ENCODE measurements at regions of chr7 and their contacts with region 1.

Region 1: DNA sequence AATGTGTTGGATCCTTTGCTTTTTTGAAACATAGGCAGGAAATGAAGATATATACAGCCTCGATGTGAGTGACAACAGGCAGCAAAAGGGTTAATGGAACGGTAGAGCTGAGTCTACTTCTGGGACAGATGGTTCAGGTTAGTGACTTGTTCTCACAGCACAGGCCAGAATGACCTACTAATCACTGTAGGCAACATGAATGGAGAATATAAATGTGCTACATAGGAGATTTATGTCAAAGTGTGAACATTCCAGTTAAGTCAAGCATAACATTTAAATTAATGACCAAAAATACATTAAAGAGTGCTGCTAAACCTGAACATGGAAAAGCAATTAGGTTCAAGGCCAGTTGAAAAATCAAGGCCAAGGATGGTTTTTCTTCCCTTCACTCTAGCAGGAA is 235.2 kb downstream of the POU6F2 start:
- H3K4me3 ChIP-seq: no peak overlapping the region
- H3K27ac ChIP-seq: no peak overlapping the region
- H3K4me1 ChIP-seq: no peaks in the 10 kb centered on the region
- CTCF ChIP-seq: no peak

Region 2: GRCh38 chr7:39186671-39187070 is 26.2 kb before region 1 on chr7:
- CTCF ChIA-PET with region 1: no interaction called
- POLR2A ChIA-PET with region 1: no interaction called
- H3K4me3 ChIP-seq: no peak overlapping the region
- H3K27ac ChIP-seq: no peak overlapping the region
- H3K4me1 ChIP-seq: no peaks in the 10 kb centered on the region
- CTCF ChIP-seq: no peak

Region 3: DNA sequence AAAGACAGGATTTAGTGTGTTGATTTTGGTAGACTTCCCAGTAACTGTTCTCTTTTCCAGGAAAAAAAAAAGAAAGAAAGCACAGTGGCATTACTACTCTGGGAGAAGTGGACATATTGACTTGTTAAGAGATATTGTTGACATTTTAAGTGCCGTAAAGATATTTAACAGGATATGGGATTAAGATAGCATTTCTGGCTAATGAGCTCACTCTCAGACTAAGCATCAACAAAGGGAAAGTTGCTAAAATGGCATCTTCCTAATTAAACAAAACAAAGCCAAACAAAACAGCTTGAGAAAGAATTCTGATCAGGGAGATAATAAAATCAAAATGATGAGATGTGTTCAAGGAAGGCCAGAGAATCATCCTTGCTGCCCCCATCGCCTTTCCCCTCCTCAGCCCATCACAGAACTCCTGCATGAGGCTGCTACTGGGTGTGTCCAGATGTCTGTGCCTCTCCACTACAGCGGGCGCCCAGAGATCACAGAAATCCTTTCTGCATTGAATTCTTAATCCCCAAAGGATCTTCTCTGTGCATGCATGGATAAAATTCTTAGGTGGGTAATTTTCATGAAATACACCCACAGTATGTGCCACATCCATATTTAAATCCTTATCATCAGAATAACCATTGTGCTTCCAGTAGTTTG is 35.3 kb after region 1 on chr7:
- CTCF ChIA-PET with region 1: no interaction called
- POLR2A ChIA-PET with region 1: interaction called, 13 read pairs
- H3K4me3 ChIP-seq: no peak overlapping the region
- H3K27ac ChIP-seq: no peak overlapping the region
- H3K4me1 ChIP-seq: peaks cover 11% of the 10 kb centered on the region
- CTCF ChIP-seq: no peak

Region 4: DNA sequence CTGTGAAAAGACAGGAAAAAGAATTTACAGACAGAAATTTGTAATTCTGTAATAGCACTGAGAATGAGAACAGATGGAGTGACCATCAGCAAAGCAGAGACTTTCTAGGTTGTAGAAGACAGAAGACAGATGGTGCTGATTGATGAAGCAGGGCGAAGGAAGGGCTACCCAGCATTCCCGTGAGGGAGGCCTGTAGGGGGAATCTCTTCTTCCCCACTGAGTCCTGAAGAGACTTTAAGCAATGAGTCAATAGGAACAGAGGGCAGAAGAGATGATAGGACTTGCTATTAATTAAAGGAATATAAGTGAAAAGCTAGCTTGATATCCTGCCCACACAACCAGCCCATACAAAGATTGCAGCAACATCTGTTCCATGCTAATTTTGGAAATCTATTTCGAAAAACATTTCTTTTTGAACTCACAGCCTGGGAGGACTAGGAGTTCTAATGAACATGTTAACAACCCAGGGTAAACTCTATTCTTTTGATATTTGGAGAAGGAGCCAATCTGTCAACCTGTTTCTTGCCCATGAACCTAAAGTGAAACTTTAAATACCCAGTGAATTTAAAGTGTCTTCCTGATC is 454.6 kb after region 1 on chr7:
- CTCF ChIA-PET with region 1: no interaction called
- POLR2A ChIA-PET with region 1: no interaction called
- H3K4me3 ChIP-seq: no peak overlapping the region
- H3K27ac ChIP-seq: no peak overlapping the region
- H3K4me1 ChIP-seq: peaks cover 12% of the 10 kb centered on the region; the same call in 1 of the 2 replicates
- CTCF ChIP-seq: no peak

Measured in HEK293 (cell line).